Panc1 (cell line): ENCODE measurements at regions of chr1 and their contacts with region 1.

Region 1: GRCh38 chr1:44799770-44800584 is at the start of gene PLK3:
- DNase-seq: peak; percentile 96
- ATAC-seq: peak; percentile 91
- H3K4me3 ChIP-seq: peak within 1 kb of the TSS; percentile 56 to 83
- H3K27ac ChIP-seq: peak within 1 kb of the TSS; percentile 86
- H3K4me1 ChIP-seq: peaks cover 22% of the 10 kb centered on the region
- H3K27me3 ChIP-seq: no peaks in the 10 kb centered on the region
- CTCF ChIP-seq: peak; percentile 98
- total RNA-seq, gene PLK3: 13.7 TPM

Region 2: DNA sequence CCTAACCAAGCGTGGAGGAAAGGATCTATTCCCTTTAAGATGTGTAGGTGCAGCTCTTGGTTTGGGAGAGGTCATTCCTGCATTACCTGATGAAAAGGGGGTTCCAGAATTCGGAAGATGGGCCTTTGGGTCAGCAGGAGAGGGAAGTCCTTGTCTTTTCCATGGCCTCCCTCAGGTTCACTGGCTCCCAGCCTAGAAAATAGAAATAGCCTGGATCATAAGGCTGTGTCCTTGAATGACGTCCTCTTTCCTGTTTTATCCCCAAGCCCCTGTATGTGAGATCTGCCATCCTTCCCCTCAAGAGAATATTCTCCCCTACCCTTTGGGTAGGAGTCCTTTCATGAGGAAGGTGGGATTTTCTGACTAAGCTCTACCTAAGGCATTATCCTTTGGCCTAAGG is 39.1 kb before region 1 on chr1:
- CTCF ChIA-PET with region 1: no interaction called
- POLR2A ChIA-PET with region 1: no interaction called
- in situ Hi-C with region 1: no loop called
- intact Hi-C with region 1: no loop called
- DNase-seq: no peak
- ATAC-seq: no peak
- H3K4me3 ChIP-seq: no peak overlapping the region
- H3K27ac ChIP-seq: no peak overlapping the region
- H3K4me1 ChIP-seq: no peaks in the 10 kb centered on the region
- H3K27me3 ChIP-seq: no peaks in the 10 kb centered on the region
- CTCF ChIP-seq: no peak

Region 3: DNA sequence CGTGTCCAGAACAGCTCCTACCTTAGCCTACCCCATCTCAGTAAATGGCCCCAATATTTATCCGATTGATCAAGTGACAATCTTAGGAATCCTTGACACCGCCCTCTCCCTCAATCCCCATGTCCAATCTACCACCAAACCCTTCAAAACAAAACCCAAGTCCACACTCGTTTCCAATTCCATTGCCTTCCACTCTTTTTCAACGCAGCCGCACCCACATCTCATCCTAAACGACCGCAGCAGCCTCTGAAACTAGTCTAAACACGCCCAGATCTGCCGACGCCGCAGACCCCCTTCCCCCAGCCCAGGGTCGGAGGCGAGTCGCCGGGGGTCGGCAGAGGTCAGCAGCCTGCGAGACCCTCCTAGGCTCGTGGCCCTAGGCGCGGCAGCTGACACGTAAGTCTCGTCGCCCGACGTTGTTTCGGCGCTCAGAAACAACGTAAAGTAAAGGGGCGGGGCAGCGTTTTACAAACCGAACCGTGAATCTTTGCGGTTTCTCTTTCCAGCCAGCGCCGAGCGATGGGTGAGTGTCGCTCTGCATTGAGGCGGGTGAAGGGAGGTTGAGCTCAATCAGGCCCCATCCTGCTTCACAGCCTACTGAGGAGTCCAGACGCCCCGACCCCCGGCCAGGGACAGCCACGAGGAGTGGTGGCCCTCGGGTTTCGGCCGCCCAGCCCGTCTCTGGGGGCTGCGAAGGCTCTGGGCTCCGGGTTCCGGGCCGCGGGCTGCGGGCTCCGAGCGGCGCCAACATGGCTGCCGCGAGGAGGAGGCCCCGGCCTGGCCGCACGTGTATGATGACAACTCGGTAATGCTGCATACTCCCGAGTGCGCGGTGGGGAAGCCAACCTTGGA is 24.7 kb before region 1 on chr1 and contains the start of gene RPS8:
- CTCF ChIA-PET with region 1: no interaction called
- POLR2A ChIA-PET with region 1: interaction called, 10 read pairs
- in situ Hi-C with region 1: no loop called
- intact Hi-C with region 1: no loop called
- DNase-seq: peak; percentile 83
- ATAC-seq: peak; percentile 93
- H3K4me3 ChIP-seq: peak within 1 kb of the TSS; percentile 84 to 91
- H3K27ac ChIP-seq: peak within 1 kb of the TSS; percentile 92
- H3K4me1 ChIP-seq: peaks cover 10% of the 10 kb centered on the region
- H3K27me3 ChIP-seq: no peaks in the 10 kb centered on the region
- CTCF ChIP-seq: no peak
- total RNA-seq, gene RPS8: 1,087 TPM

Region 4: DNA sequence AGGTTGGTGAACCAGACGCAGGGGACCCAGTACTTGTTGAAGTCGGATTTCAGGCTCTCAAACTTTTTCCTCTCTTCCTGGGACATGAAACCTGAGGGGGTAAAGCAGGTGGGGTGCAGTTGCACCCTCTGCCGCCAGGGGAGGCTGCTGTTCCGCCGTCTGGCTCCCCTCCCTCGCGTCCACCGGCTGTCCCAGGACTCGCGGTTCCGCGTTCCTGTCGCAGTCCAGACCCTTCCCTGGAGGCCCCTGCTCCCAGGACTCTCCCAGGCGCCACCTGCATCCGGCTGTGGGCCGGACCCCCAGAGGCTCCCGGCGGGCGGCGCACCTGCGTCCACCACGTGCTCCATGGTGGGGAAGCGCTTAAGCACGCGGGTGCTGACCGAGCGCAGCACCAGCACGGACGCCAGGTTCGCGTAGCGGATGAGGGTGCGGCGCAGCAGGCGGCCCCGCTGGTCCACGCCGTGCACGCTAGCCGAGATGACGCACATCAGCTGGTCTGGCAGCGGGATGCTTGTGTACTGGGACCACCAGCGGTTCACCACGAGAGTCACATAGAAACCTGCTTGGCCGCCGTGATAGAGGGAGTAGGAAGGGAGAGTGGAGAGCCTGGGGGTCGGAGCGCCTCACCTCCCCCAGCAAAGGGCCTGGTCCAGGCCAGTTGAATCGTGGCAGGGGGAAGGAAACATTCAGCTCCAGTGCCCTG is 13.7 kb before region 1 on chr1:
- CTCF ChIA-PET with region 1: interaction called, 10 read pairs
- POLR2A ChIA-PET with region 1: interaction called, 6 read pairs
- in situ Hi-C with region 1: no loop called
- intact Hi-C with region 1: no loop called
- DNase-seq: no peak
- ATAC-seq: peak; percentile 29; the same call in 1 of the 2 replicates
- H3K4me3 ChIP-seq: no peak overlapping the region
- H3K27ac ChIP-seq: no peak overlapping the region
- H3K4me1 ChIP-seq: no peaks in the 10 kb centered on the region; the same call in 1 of the 2 replicates
- H3K27me3 ChIP-seq: no peaks in the 10 kb centered on the region
- CTCF ChIP-seq: peak; percentile 90

Region 5: GRCh38 chr1:44924835-44925513 is 125.0 kb after region 1 on chr1:
- CTCF ChIA-PET with region 1: no interaction called
- POLR2A ChIA-PET with region 1: no interaction called
- in situ Hi-C with region 1: no loop called
- intact Hi-C with region 1: no loop called
- DNase-seq: peak; percentile 83
- ATAC-seq: peak; percentile 95
- H3K4me3 ChIP-seq: peak overlapping the region in 1 of 2 experiments; percentile 14; a peak in 1 of 4 replicates
- H3K27ac ChIP-seq: no peak overlapping the region
- H3K4me1 ChIP-seq: peaks cover 8% of the 10 kb centered on the region; the same call in 1 of the 2 replicates
- H3K27me3 ChIP-seq: no peaks in the 10 kb centered on the region
- CTCF ChIP-seq: peak; percentile 43; the same call in 1 of the 2 replicates